MCF 10A (cell line): ENCODE measurements at regions of chr14 and their contacts with region 1.

Region 1: DNA sequence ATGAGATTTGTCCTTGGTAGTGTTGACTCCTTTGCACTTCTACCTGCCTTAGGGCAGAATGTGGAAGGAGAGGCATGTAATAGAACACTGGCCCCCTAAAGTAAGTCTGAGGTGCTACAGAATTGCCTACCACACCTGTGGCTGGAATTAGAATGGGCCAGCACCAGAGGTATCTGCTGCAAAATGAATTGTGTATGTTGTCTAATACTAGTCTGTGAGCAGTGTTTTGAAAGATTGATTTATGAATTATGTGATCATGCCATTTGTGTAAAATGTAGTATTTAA is 5.7 kb upstream of the STYX start:
- DNase-seq: no peak
- H3K4me3 Mint-ChIP-seq: no peak overlapping the region
- H3K27ac Mint-ChIP-seq: peak overlapping the region; percentile 67
- H3K4me1 Mint-ChIP-seq: peaks cover 11% of the 10 kb centered on the region
- H3K27me3 Mint-ChIP-seq: no peaks in the 10 kb centered on the region
- CTCF ChIP-seq: no peak

Region 2: DNA sequence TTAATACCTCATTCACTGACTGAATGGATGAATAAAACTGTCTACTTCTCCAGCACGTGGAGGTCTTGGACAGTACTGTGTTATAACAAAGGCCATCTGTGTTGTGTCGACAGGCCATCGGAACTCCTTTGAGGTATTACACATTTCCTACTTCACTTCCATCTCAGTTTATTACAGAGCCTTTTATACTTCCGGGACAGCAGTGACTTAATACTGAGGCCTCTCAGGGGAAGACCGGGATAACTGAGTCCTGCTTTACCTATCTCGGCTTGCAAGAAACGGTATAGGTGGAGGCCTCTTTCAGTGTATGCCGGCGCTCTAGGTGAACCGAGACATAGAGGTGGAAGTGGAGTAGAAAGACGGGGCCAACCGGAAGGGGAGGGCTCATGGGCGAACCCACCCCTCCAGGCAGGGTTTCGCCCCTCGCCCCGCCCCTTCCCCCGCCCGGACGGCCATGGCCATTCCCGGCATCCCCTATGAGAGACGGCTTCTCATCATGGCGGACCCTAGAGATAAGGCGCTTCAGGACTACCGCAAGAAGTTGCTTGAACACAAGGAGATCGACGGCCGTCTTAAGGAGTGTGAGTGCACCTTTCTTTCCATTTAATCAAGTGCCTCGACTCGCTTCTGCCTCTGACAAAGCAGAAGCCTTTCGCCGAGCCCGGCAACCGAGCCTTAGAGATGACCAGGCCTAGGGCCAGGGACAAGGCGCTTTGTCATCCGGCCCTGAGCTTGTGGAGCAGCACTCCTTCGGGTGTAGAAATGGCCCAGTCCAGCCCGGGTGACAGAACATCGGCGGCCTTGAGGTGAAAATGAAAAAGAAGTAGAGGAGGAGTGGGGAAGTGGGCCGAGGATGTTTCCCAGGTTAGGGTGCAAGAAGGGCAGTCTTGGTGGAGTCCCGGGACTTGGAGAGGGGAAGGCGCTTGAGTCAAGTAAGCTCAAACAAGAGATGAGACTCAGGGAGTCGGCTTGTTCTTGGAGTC is 17.3 kb before region 1 on chr14 and contains the start of gene PSMC6:
- CTCF ChIA-PET with region 1: interaction called, 10 read pairs
- POLR2A ChIA-PET with region 1: interaction called, 73 read pairs
- intact Hi-C with region 1: no loop called
- DNase-seq: peak; percentile 95
- H3K4me3 Mint-ChIP-seq: peak within 1 kb of the TSS; percentile 98
- H3K27ac Mint-ChIP-seq: peak within 1 kb of the TSS; percentile 99
- H3K4me1 Mint-ChIP-seq: peaks cover 22% of the 10 kb centered on the region
- H3K27me3 Mint-ChIP-seq: no peaks in the 10 kb centered on the region
- CTCF ChIP-seq: no peak
- total RNA-seq, gene PSMC6: 83.9 and 90.0 TPM in 2 replicates